ENCODE measurements at regions of chr6 and their contacts with region 1.

Region 1: DNA sequence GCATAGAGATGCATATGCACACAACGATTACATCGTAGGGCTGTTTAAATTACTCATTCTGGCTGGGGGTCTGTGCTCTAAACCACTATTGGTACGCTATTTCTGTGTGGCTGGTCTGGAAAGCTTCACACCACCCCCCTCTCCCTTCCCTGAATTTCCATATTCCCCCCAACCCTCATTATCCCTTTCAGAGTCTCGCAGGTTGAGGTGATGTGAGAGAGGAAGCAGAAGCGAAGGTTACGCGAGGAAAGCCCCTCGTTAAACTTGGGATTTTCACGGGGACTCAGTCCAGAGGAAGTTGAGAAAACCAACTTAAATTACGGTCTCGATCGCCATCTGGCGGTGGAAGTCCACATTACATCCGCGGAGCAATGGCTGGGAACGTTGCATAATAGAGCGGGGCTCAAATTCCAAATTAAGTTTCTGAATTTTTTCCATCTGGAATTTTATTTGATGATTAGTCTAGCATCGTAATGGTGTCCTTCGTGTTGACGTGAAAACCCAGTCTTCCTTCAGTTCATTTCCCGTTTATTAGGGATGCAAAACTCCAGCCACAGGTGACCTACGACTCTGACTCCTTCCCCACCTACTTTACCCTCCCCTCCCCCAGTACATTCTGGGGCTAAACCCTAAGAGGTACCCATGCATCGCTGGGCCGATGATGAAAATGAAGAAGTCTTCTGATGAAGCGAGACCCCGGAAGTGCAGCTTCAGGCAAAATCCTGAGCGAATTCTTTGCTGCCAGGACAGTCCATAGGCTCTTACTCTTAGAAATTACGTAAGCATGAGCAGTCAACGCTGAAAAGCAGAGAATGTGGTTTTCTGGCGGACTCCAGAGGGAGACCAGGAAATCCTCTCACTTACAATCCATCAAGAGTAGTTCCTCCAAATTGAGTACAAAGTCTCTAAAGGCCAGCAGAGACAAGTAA is 19.7 kb downstream of the HLA-DOB start:
- DNase-seq: peak; percentile 60 to 71 (median 65)
- H3K4me3 ChIP-seq: no peak overlapping the region
- H3K4me3 Mint-ChIP-seq: peak overlapping the region in 7 of 8 donors; percentile 33 to 79 (median 65)
- H3K27ac ChIP-seq: no peak overlapping the region
- H3K27ac Mint-ChIP-seq: no peak overlapping the region
- H3K4me1 ChIP-seq: peaks cover 9% of the 10 kb centered on the region
- H3K4me1 Mint-ChIP-seq: peaks cover 10 to 20% (median 13%) of the 10 kb centered on the region in 4 donors
- H3K27me3 ChIP-seq: peaks cover 23% of the 10 kb centered on the region
- H3K27me3 Mint-ChIP-seq: peaks cover 41 to 63% of the 10 kb centered on the region in 2 donors

Region 2: DNA sequence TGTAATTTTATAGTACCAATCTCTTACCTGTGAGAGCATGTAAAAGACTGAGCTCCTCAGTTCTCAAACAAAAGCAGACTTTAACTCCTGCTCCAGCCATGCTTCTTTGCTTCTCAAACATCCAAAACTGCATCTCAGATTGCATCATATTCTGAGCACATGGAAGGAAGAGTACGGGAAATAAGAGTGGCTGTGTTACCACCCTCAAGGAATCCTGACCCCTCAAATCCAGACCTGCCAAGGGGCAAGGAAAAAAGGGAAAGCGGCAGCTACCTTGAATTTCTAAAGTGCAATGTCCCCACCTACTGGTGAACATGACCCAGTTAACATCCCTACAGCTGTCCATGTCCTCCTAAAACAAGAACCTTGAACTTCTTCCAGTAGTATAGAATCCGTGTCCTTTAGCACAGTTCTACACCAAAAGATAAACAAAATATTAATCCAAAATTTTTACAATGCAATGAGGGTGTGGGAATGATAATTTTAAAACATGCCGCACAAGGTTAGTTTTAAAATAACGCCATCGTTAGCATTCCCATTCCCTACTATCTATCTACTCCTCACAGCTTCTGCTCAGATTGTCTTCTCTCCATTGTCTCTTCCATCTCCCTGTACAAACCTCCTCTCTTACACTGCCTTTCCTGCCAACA is 96.6 kb before region 1 on chr6:
- CTCF ChIA-PET with region 1: no interaction called
- POLR2A ChIA-PET with region 1: no interaction called
- intact Hi-C with region 1: loop called (anchors 2 kb)
- DNase-seq: peak in 4 of 5 donors; percentile 29 to 45 (median 38)
- H3K4me3 ChIP-seq: no peak overlapping the region
- H3K4me3 Mint-ChIP-seq: peak overlapping the region in 2 of 8 donors; percentile 35 to 58
- H3K27ac ChIP-seq: no peak overlapping the region
- H3K27ac Mint-ChIP-seq: peak overlapping the region in 1 of 7 donors; percentile 90
- H3K4me1 ChIP-seq: no peaks in the 10 kb centered on the region
- H3K4me1 Mint-ChIP-seq: peaks cover 0 to 4% (median 1%) of the 10 kb centered on the region in 4 donors
- H3K27me3 ChIP-seq: peaks cover 9% of the 10 kb centered on the region
- H3K27me3 Mint-ChIP-seq: peaks cover 24 to 26% of the 10 kb centered on the region in 2 donors